Calu3 (cell line): ENCODE measurements at regions of chr12 and their contacts with region 1.

Region 1: GRCh38 chr12:117367011-117367638 is 5.7 kb upstream of the NOS1 start:
- DNase-seq: peak; percentile 85
- H3K4me3 Mint-ChIP-seq: no peak overlapping the region
- H3K27ac Mint-ChIP-seq: no peak overlapping the region
- H3K4me1 Mint-ChIP-seq: no peaks in the 10 kb centered on the region
- H3K27me3 Mint-ChIP-seq: peaks cover 74% of the 10 kb centered on the region
- CTCF ChIP-seq: peak; percentile 93

Region 2: DNA sequence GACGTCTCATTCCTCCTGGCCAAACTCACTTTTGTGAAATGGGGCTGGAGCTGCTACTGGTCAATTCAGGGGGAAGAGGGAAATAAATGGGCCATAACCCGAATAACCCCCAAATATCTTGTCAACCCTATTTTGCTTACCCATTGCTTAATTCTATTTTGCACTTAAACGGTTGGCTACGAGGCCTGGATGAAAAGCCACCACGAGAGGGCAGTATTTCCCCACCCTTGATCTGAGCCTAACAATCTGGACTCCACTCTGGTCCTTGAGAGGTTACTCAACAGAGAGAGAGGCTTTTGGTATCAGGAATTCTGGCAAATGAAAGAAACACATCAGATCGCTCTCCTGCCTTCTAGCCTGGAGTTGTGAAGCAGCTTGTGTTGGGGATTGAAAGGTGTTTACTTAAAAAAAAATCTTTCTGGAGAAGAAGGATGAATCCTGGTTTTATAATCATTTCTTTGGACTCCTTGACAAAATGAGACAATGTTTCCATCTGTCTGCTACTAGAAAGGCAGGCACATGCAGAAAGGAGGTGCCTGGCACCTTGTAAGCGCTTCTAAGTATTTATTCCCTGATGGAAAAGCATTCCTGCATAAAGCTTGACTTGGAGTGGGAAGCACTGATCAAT is 154.4 kb before region 1 on chr12:
- CTCF ChIA-PET with region 1: no interaction called
- intact Hi-C with region 1: loop called (anchors 2 kb)
- DNase-seq: peak; percentile 79
- H3K4me3 Mint-ChIP-seq: no peak overlapping the region
- H3K27ac Mint-ChIP-seq: no peak overlapping the region
- H3K4me1 Mint-ChIP-seq: no peaks in the 10 kb centered on the region
- H3K27me3 Mint-ChIP-seq: peaks cover 100% of the 10 kb centered on the region
- CTCF ChIP-seq: peak; percentile 76

Region 3: GRCh38 chr12:117236456-117237001 is 130.6 kb before region 1 on chr12:
- CTCF ChIA-PET with region 1: interaction called, 10 read pairs
- intact Hi-C with region 1: loop called (anchors 2 kb)
- DNase-seq: peak; percentile 93
- H3K4me3 Mint-ChIP-seq: no peak overlapping the region
- H3K27ac Mint-ChIP-seq: no peak overlapping the region
- H3K4me1 Mint-ChIP-seq: no peaks in the 10 kb centered on the region
- H3K27me3 Mint-ChIP-seq: peaks cover 37% of the 10 kb centered on the region
- CTCF ChIP-seq: peak; percentile 94

Region 4: GRCh38 chr12:117388951-117389446 is 21.9 kb after region 1 on chr12:
- CTCF ChIA-PET with region 1: no interaction called
- intact Hi-C with region 1: no loop called
- DNase-seq: no peak
- H3K4me3 Mint-ChIP-seq: no peak overlapping the region
- H3K27ac Mint-ChIP-seq: no peak overlapping the region
- H3K4me1 Mint-ChIP-seq: no peaks in the 10 kb centered on the region
- H3K27me3 Mint-ChIP-seq: peaks cover 47% of the 10 kb centered on the region
- CTCF ChIP-seq: no peak

Region 5: GRCh38 chr12:117587631-117588287 is 220.6 kb after region 1 on chr12:
- CTCF ChIA-PET with region 1: interaction called, 57 read pairs
- intact Hi-C with region 1: loop called (anchors 1 kb)
- DNase-seq: peak; percentile 77
- H3K4me3 Mint-ChIP-seq: no peak overlapping the region
- H3K27ac Mint-ChIP-seq: no peak overlapping the region
- H3K4me1 Mint-ChIP-seq: no peaks in the 10 kb centered on the region
- H3K27me3 Mint-ChIP-seq: peaks cover 56% of the 10 kb centered on the region
- CTCF ChIP-seq: peak; percentile 90

Region 6: DNA sequence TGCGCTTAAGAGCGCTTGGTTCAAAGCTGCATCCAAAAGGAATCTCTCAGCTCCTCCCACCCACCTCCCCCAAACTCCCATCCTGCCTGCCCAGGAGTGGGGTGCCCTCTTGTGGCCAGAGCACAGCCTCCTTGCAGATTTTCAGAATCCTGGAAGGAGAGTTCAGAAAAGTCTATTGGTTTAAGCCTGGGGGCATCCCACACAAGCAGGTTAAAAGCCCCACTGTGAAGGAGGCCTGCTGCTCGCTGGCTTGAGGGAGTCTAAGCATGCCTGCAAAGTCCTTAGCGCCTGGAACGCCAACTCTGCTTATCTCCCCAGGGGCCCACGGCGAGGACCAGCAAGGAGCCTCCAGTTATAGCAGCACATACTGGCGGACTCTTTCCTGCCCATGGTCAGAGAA is 304.6 kb after region 1 on chr12:
- CTCF ChIA-PET with region 1: interaction called, 12 read pairs
- intact Hi-C with region 1: loop called (anchors 1 kb)
- DNase-seq: peak; percentile 72
- H3K4me3 Mint-ChIP-seq: no peak overlapping the region
- H3K27ac Mint-ChIP-seq: no peak overlapping the region
- H3K4me1 Mint-ChIP-seq: no peaks in the 10 kb centered on the region
- H3K27me3 Mint-ChIP-seq: peaks cover 88% of the 10 kb centered on the region
- CTCF ChIP-seq: peak; percentile 59

Region 7: DNA sequence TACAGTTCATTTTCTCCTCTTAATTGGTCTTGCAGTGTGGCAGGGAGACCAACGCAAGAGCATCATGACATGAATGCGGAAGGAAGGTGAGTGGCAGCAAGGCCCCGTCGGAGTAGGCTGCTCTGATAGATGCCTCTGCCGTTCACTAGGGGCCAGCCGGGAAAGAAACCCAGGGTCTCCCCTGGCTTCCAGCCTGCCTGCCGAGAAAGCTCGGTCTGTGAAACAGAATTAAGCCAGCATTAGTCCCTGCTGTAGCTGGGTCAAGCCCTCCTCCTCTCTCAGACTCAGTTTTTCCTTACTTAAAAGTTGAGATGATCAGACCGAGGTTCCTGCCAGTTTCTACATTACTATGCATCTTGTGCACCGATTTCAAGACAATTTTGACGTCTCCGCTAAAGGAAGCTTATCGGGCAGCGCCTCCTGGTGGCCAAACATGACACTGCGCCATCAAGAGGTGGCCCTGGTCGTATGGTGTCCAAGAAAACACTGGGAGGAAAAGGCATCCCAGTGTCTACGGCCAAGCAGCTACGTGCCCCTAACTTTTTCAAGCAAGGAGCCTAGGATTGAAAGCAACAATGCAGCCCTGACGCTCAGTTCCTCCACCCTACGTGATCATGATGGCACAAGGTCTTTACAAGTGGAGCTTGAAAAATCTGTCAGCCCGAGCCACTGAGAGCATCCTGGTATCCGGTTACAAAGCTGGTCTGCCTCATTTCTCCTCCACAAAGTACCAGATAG is 470.0 kb after region 1 on chr12:
- CTCF ChIA-PET with region 1: interaction called, 34 read pairs
- intact Hi-C with region 1: loop called (anchors 1 kb)
- DNase-seq: peak; percentile 84
- H3K4me3 Mint-ChIP-seq: no peak overlapping the region
- H3K27ac Mint-ChIP-seq: no peak overlapping the region
- H3K4me1 Mint-ChIP-seq: peaks cover 7% of the 10 kb centered on the region
- H3K27me3 Mint-ChIP-seq: peaks cover 42% of the 10 kb centered on the region
- CTCF ChIP-seq: peak; percentile 96

Region 8: GRCh38 chr12:117850048-117850447 is 482.9 kb after region 1 on chr12:
- CTCF ChIA-PET with region 1: interaction called, 14 read pairs
- intact Hi-C with region 1: loop called (anchors 5 kb)
- DNase-seq: peak; percentile 49
- H3K4me3 Mint-ChIP-seq: no peak overlapping the region
- H3K27ac Mint-ChIP-seq: no peak overlapping the region
- H3K4me1 Mint-ChIP-seq: peaks cover 25% of the 10 kb centered on the region
- H3K27me3 Mint-ChIP-seq: peaks cover 24% of the 10 kb centered on the region
- CTCF ChIP-seq: peak; percentile 81